CD4-positive, alpha-beta memory T cell (primary cell): ENCODE measurements at regions of chr7 and their contacts with region 1.

Region 1: DNA sequence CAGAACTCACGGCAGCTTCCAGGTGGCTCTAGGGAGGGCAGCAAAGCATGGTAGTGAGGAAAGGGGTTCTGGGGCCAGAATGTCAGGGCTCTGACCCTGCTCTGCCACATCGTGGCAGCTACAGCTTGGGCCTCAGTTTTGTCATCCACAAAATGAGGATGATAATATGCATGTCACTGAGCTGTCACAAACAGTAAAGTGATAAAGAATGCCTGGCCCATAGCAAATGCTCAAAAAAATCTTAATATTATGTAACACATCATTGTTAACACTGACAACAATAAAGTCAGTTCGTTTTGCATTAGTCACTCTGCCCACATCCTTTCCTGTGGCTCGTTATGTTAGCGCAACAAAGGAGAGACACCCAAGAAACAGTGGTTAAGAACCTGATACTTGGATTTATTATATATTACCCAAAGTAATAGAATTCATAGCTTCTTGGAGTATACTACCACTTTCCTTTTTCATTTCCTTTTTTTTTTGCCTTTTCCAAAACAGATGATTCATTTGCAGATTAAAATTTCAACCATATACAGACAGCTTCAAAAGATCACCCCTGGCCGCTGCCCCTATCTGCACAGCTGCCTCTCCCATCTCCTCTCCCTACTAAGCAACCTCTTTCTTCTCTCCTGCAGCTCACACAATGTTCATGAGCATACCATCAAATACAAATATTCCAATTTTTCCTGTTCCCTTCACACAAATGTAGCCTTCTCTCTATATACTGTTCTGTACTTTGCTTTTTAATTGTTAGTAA is 45.5 kb upstream of the DDC start:
- DNase-seq: peak; percentile 61 to 79 (median 74)
- H3K4me3 ChIP-seq: peak overlapping the region in 1 of 2 donors; percentile 9
- H3K4me3 Mint-ChIP-seq: peak overlapping the region in 7 of 8 donors; percentile 17 to 76 (median 63)
- H3K27ac ChIP-seq: peak overlapping the region; percentile 31
- H3K27ac Mint-ChIP-seq: peak overlapping the region; percentile 54 to 94 (median 86)
- H3K4me1 ChIP-seq: peaks cover 48% of the 10 kb centered on the region
- H3K4me1 Mint-ChIP-seq: peaks cover 34 to 54% (median 45%) of the 10 kb centered on the region in 4 donors
- H3K27me3 ChIP-seq: no peaks in the 10 kb centered on the region
- H3K27me3 Mint-ChIP-seq: no peaks in the 10 kb centered on the region

Region 2: DNA sequence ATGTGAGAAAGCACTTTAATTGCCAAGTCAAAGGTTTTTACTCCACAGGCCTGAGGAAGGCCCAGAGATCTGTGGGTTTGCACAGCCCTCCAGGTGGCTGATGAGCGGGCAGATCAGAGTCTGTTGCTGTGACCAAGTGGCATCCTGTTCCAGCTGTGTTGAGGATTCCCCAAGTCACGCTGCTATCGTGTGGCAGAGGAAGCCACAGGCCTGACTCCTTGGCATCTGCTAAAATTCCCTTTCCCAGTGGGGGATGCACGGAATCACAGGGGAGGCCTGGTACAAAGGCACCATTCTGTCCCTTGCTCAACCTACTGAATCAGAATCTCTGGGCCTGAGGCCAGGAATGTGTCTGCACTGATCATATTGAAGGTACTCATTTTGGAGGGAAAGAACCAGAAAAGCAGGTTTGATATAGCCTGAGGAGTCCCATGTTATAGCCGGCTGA is 25.8 kb before region 1 on chr7:
- CTCF ChIA-PET with region 1: no interaction called
- POLR2A ChIA-PET with region 1: no interaction called
- intact Hi-C with region 1: no loop called
- DNase-seq: no peak
- H3K4me3 ChIP-seq: no peak overlapping the region
- H3K4me3 Mint-ChIP-seq: no peak overlapping the region
- H3K27ac ChIP-seq: no peak overlapping the region
- H3K27ac Mint-ChIP-seq: no peak overlapping the region
- H3K4me1 ChIP-seq: no peaks in the 10 kb centered on the region
- H3K4me1 Mint-ChIP-seq: no peaks in the 10 kb centered on the region
- H3K27me3 ChIP-seq: no peaks in the 10 kb centered on the region
- H3K27me3 Mint-ChIP-seq: peaks cover 1 to 5% of the 10 kb centered on the region in 2 donors

Region 3: GRCh38 chr7:50595491-50596102 is 15.1 kb before region 1 on chr7:
- CTCF ChIA-PET with region 1: interaction called, 23 read pairs
- POLR2A ChIA-PET with region 1: interaction called, 3 read pairs
- intact Hi-C with region 1: no loop called
- DNase-seq: peak in 4 of 5 donors; percentile 15 to 38 (median 28)
- H3K4me3 ChIP-seq: no peak overlapping the region
- H3K4me3 Mint-ChIP-seq: peak overlapping the region in 1 of 8 donors; percentile 32
- H3K27ac ChIP-seq: no peak overlapping the region
- H3K27ac Mint-ChIP-seq: peak overlapping the region in 4 of 7 donors; percentile 54 to 85 (median 70)
- H3K4me1 ChIP-seq: peaks cover 18% of the 10 kb centered on the region
- H3K4me1 Mint-ChIP-seq: peaks cover 13 to 18% (median 17%) of the 10 kb centered on the region in 4 donors
- H3K27me3 ChIP-seq: no peaks in the 10 kb centered on the region
- H3K27me3 Mint-ChIP-seq: peaks cover 0 to under 1% of the 10 kb centered on the region in 2 donors

Region 4: GRCh38 chr7:50653126-50653864 is 42.6 kb after region 1 on chr7:
- CTCF ChIA-PET with region 1: no interaction called
- POLR2A ChIA-PET with region 1: no interaction called
- intact Hi-C with region 1: no loop called
- DNase-seq: no peak
- H3K4me3 ChIP-seq: no peak overlapping the region
- H3K4me3 Mint-ChIP-seq: peak overlapping the region in 1 of 8 donors; percentile 8
- H3K27ac ChIP-seq: no peak overlapping the region
- H3K27ac Mint-ChIP-seq: no peak overlapping the region
- H3K4me1 ChIP-seq: no peaks in the 10 kb centered on the region
- H3K4me1 Mint-ChIP-seq: peaks cover 0 to 1% (median 0%) of the 10 kb centered on the region in 4 donors
- H3K27me3 ChIP-seq: no peaks in the 10 kb centered on the region
- H3K27me3 Mint-ChIP-seq: no peaks in the 10 kb centered on the region

Region 5: GRCh38 chr7:50664461-50664922 is 53.8 kb after region 1 on chr7:
- CTCF ChIA-PET with region 1: interaction called, 6 read pairs
- POLR2A ChIA-PET with region 1: interaction called, 11 read pairs
- intact Hi-C with region 1: loop called (anchors 5 kb)
- DNase-seq: no peak
- H3K4me3 ChIP-seq: no peak overlapping the region
- H3K4me3 Mint-ChIP-seq: peak overlapping the region in 4 of 8 donors; percentile 23 to 36 (median 25)
- H3K27ac ChIP-seq: no peak overlapping the region
- H3K27ac Mint-ChIP-seq: peak overlapping the region in 6 of 7 donors; percentile 7 to 72 (median 47)
- H3K4me1 ChIP-seq: peaks cover 60% of the 10 kb centered on the region
- H3K4me1 Mint-ChIP-seq: peaks cover 46 to 60% (median 54%) of the 10 kb centered on the region in 4 donors
- H3K27me3 ChIP-seq: no peaks in the 10 kb centered on the region
- H3K27me3 Mint-ChIP-seq: no peaks in the 10 kb centered on the region

Region 6: DNA sequence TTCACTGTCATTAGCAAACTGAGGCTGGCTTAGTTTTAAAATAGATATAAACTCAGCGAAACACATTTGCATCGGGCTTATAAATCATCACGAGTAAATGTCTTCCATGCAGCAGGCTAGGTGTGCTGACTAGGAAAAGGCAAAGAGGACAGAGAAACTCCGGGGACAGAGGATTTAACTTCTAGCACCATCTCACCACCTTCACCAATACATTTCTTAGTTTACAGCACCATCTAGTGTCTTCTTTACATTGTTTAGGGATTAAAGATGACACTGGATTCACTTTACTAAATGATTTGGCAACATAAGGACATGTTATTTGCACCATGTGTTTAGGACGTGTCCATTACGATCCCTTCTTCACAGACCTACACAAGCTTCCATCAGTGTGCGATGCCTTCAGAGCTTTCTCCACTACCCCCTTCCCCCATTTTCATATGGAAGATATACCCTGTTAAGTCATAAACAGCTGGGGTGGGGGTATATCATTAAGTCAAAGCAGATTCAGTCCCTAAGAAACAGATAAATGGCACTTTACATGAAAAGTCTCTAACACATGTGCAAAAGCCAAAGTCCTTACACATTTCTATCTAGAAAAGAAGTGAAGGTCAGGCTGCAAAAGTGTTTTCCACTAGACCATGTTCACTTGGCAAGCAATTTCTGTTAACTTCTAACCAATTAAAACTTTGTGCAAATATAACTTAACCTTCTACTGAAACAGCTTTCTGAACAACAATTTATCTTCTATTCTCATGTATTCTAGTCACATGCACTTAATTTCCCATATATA is 68.7 kb after region 1 on chr7:
- CTCF ChIA-PET with region 1: interaction called, 27 read pairs
- POLR2A ChIA-PET with region 1: no interaction called
- intact Hi-C with region 1: loop called (anchors 2 kb)
- DNase-seq: peak in 4 of 5 donors; percentile 51 to 64 (median 58)
- H3K4me3 ChIP-seq: no peak overlapping the region
- H3K4me3 Mint-ChIP-seq: no peak overlapping the region
- H3K27ac ChIP-seq: no peak overlapping the region
- H3K27ac Mint-ChIP-seq: no peak overlapping the region
- H3K4me1 ChIP-seq: no peaks in the 10 kb centered on the region
- H3K4me1 Mint-ChIP-seq: peaks cover 0 to 3% (median under 1%) of the 10 kb centered on the region in 4 donors
- H3K27me3 ChIP-seq: no peaks in the 10 kb centered on the region
- H3K27me3 Mint-ChIP-seq: peaks cover 0 to under 1% of the 10 kb centered on the region in 2 donors

Region 7: DNA sequence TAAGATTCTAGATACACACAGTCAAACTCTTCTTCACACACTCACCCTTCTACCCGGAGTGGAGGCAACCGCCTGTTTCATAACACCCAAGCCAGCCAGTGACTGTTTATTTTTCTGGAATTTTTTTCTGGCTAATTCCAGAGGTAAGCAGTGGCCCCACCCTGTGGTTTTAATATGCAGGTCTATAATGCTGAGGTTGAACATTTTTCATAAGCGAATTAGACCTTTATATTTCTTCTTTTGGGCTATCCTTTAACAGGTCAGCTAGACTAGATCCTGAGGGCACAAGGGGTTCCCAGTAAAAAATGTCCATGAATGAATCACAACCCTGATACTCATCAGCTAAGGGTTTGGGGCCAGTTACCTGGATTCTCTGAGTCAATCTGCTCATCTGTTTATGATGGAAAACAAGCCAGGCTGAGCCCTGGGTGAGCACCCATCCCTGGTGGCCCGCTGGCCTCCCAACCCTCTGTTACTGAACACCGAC is 95.8 kb after region 1 on chr7:
- CTCF ChIA-PET with region 1: no interaction called
- POLR2A ChIA-PET with region 1: no interaction called
- intact Hi-C with region 1: no loop called
- DNase-seq: no peak
- H3K4me3 ChIP-seq: no peak overlapping the region
- H3K4me3 Mint-ChIP-seq: no peak overlapping the region
- H3K27ac ChIP-seq: no peak overlapping the region
- H3K27ac Mint-ChIP-seq: no peak overlapping the region
- H3K4me1 ChIP-seq: no peaks in the 10 kb centered on the region
- H3K4me1 Mint-ChIP-seq: peaks cover 0 to 1% (median 0%) of the 10 kb centered on the region in 4 donors
- H3K27me3 ChIP-seq: no peaks in the 10 kb centered on the region
- H3K27me3 Mint-ChIP-seq: no peaks in the 10 kb centered on the region

Region 8: DNA sequence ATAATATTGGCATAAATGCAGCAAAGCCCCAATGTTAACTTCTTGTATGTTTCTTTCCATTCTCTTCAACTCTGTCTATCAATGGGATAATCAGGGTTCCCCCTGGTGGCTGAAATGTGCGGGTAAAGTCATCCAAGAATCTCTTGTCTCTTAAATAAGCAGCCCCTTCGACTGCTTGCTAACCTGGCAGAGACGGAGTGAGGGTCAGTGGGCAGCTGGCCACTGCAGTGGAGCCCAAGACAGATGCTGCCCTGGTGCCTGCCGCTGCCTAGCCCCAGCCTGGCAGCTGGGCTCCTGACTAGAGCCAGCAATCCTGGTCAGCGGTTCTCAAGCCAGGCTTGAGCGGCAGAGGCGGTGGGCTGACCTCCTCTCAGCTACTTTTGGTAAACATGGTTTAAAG is 457.1 kb after region 1 on chr7:
- CTCF ChIA-PET with region 1: interaction called, 3 read pairs
- POLR2A ChIA-PET with region 1: no interaction called
- intact Hi-C with region 1: loop called (anchors 10 kb)
- DNase-seq: peak; percentile 19 to 41 (median 28)
- H3K4me3 ChIP-seq: no peak overlapping the region
- H3K4me3 Mint-ChIP-seq: no peak overlapping the region
- H3K27ac ChIP-seq: no peak overlapping the region
- H3K27ac Mint-ChIP-seq: no peak overlapping the region
- H3K4me1 ChIP-seq: no peaks in the 10 kb centered on the region
- H3K4me1 Mint-ChIP-seq: peaks cover 0 to 5% (median under 1%) of the 10 kb centered on the region in 4 donors
- H3K27me3 ChIP-seq: no peaks in the 10 kb centered on the region
- H3K27me3 Mint-ChIP-seq: peaks cover 1 to 2% of the 10 kb centered on the region in 2 donors